ENCODE measurements at regions of chr12 and their contacts with region 1.

Region 1: GRCh38 chr12:92065018-92065499 is 80.6 kb downstream of the BTG1 start:
- DNase-seq: peak; percentile 31
- H3K4me3 Mint-ChIP-seq: peak overlapping the region; percentile 27
- H3K27ac Mint-ChIP-seq: peak overlapping the region; percentile 69
- H3K4me1 Mint-ChIP-seq: peaks cover 55% of the 10 kb centered on the region
- H3K27me3 Mint-ChIP-seq: no peaks in the 10 kb centered on the region

Region 2: DNA sequence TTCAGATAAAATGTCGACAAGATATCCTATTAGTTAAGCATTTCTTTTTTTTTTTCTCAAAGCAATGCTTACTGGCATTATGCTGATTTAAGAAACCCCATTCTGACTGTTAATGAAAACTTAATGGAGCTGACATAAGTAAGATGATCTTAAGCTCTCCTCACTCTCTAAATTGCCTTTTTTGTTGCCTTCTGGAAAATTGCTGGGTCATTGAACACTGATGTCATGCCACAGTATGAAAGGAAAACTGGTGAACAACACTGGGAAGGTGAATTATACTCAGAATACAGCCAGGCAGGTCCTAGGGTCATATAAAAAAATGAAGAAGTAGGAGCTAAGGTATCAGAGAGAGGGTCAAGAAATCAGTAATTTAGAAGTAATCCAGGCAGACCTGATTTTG is 99.3 kb before region 1 on chr12:
- intact Hi-C with region 1: no loop called
- DNase-seq: no peak
- H3K4me3 Mint-ChIP-seq: no peak overlapping the region
- H3K27ac Mint-ChIP-seq: no peak overlapping the region
- H3K4me1 Mint-ChIP-seq: no peaks in the 10 kb centered on the region
- H3K27me3 Mint-ChIP-seq: no peaks in the 10 kb centered on the region

Region 3: GRCh38 chr12:92047393-92047826 is 17.6 kb before region 1 on chr12:
- intact Hi-C with region 1: loop called (anchors 1 kb)
- DNase-seq: no peak
- H3K4me3 Mint-ChIP-seq: peak overlapping the region; percentile 49
- H3K27ac Mint-ChIP-seq: peak overlapping the region; percentile 75
- H3K4me1 Mint-ChIP-seq: peaks cover 88% of the 10 kb centered on the region
- H3K27me3 Mint-ChIP-seq: no peaks in the 10 kb centered on the region

Region 4: GRCh38 chr12:92130999-92131398 is 65.9 kb after region 1 on chr12:
- intact Hi-C with region 1: loop called (anchors 1 kb)
- DNase-seq: no peak
- H3K4me3 Mint-ChIP-seq: peak overlapping the region; percentile 72
- H3K27ac Mint-ChIP-seq: peak overlapping the region; percentile 85
- H3K4me1 Mint-ChIP-seq: peaks cover 63% of the 10 kb centered on the region
- H3K27me3 Mint-ChIP-seq: no peaks in the 10 kb centered on the region

Region 5: DNA sequence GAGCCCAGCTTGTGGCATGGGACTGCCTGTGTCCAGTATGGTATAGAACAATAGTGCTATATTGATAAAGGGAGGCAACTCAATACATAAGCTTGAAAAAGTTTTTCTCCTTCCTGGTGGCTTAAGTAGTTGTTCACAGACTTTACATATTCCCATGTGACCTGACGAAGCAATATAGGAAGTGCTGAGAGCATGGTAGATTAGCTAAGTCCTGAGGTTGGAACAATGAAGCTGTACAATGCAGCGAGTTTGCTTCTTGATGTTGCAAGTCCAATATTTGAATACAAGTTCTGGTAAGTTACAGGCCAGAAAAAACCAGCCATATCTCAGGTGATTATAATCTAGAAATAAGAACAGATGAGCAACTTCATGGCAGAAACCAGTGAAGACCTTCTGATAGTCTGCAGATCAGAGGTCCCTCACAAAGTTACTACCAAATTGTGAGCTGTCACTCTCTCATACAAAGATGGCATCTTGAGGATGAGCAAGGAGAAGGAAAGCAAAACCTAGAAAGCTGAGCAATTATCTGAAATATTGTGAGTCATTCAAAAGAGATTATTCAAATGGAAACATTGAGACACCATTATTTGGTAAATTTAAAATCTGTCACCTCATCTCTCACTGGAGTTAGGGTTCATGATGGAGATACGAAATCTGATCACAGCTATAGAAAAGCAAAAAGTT is 153.5 kb after region 1 on chr12:
- intact Hi-C with region 1: no loop called
- DNase-seq: no peak
- H3K4me3 Mint-ChIP-seq: peak overlapping the region; percentile 17
- H3K27ac Mint-ChIP-seq: peak overlapping the region; percentile 59
- H3K4me1 Mint-ChIP-seq: peaks cover 21% of the 10 kb centered on the region
- H3K27me3 Mint-ChIP-seq: no peaks in the 10 kb centered on the region

Region 6: GRCh38 chr12:92469837-92470236 is 404.8 kb after region 1 on chr12:
- intact Hi-C with region 1: loop called (anchors 1 kb)
- DNase-seq: no peak
- H3K4me3 Mint-ChIP-seq: no peak overlapping the region
- H3K27ac Mint-ChIP-seq: peak overlapping the region; percentile 81
- H3K4me1 Mint-ChIP-seq: peaks cover 30% of the 10 kb centered on the region
- H3K27me3 Mint-ChIP-seq: no peaks in the 10 kb centered on the region

Region 7: DNA sequence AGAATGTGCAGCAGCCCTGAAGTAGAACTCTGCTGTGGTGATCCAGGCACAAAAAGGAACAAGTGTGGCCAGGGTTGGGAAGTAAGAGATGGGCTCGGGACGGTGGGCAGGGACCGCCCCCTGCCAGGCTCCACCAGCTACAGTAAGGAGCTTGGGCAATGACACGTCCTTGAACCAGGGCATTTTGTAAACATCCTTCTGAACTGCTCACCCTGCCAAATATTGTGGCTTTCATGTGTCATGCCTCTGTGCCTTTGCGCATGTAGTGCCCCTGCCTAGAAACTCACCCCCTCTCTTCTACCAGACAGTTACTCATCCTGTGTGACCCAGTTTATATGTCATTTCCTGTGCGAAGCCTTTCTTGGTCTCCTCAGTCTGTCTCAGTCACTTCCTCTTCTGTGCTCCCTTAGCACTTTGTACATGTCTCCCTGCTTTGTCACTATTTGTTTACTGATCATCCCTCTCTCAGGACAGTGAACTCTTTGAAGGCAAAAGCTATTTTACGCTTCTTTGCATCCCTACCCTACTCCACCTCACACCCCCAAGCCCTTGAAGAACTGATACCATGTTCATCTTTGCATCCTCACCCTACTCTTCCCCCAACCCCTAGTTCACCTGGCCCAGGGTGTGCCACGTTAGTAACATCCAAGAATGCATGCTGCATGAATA is 528.8 kb after region 1 on chr12:
- intact Hi-C with region 1: loop called (anchors 2 kb)
- DNase-seq: peak; percentile 79
- H3K4me3 Mint-ChIP-seq: peak overlapping the region; percentile 72
- H3K27ac Mint-ChIP-seq: peak overlapping the region; percentile 99
- H3K4me1 Mint-ChIP-seq: peaks cover 63% of the 10 kb centered on the region
- H3K27me3 Mint-ChIP-seq: no peaks in the 10 kb centered on the region

Region 8: DNA sequence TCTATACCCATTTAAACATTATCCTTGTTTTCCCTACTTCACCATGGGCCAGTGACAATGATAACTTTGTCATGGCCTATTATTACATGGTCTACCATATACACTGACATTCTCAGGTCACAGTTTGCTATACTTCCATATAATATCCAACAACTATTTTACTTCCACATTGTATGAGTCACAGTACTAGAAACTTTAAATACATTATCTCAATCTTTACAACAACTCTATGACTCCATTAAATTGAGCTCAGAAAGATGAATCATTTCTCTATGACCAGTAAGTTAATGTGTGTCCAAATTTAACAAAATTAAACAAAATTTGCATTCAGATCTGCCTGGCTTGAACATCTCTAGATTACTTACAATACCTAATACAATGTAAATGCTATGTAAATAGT is 731.6 kb after region 1 on chr12:
- intact Hi-C with region 1: no loop called
- DNase-seq: no peak
- H3K4me3 Mint-ChIP-seq: no peak overlapping the region
- H3K27ac Mint-ChIP-seq: no peak overlapping the region
- H3K4me1 Mint-ChIP-seq: no peaks in the 10 kb centered on the region
- H3K27me3 Mint-ChIP-seq: no peaks in the 10 kb centered on the region

Measured in activated T-helper 1 cell treated with anti-CD3 and anti-CD28 coated beads, Interleukin-12 subunit alpha, Interleukin-12 subunit beta, Interleukin-2, Interleukin-4 antibody, amounts not matched to agents 30 ng/mL and 10 ng/mL and 1 ng/mL, durations not matched to agents 14 hours and 24 hours and 36 hours (primary cell).